ENCODE measurements at regions of chr3 and their contacts with region 1.

Region 1: DNA sequence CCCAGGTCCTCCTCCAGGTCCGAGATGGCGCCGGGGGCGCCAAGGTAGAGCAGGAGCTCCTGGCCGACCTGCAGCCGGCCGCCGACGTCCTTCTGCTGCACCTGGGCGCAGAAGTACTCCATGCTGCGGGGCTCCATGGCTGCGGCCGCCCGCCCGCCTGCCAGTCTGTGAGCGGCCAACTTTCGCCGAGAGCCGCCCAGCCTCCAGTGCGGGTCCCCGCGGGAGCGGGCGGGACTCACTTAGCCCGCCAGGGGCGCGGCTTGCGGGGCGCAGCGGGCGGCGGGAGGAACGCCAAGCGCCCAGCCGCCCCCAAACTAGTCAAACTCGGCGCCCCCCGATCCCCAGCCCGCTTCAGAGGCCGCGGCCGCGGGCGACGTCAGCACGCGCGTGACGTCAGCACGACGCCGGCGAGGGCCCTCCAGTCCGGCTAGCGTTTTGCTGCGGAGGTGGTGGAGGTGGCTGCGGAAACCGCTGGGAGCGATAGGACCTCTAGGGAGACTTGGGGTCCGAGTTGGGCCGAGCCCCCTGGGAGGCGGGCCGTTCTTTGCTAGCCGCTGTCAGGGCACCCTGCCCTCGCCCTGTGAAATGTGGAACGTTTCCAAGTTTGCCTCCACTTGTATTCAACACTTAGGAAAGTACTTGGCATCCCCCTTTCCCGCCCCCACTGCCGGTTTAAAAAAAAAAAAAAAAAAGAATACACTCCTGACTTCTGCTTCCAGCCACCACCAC is at the start of gene CLASP2:
- DNase-seq: peak; percentile 60 to 84
- H3K4me3 ChIP-seq: peak within 1 kb of the TSS; percentile 71
- H3K27ac ChIP-seq: peak within 1 kb of the TSS; percentile 39
- H3K4me1 ChIP-seq: no peaks in the 10 kb centered on the region
- H3K27me3 ChIP-seq: no peaks in the 10 kb centered on the region
- CTCF ChIP-seq: no peak
- total RNA-seq, gene CLASP2: 36.5 and 52.9 TPM in 2 replicates

Region 2: GRCh38 chr3:33131331-33132018 is 586.6 kb before region 1 on chr3:
- CTCF ChIA-PET with region 1: interaction called, 16 read pairs
- POLR2A ChIA-PET with region 1: no interaction called
- intact Hi-C with region 1: loop called (anchors 5 kb)
- DNase-seq: peak; percentile 43 to 48
- H3K4me3 ChIP-seq: no peak overlapping the region
- H3K27ac ChIP-seq: no peak overlapping the region
- H3K4me1 ChIP-seq: no peaks in the 10 kb centered on the region
- H3K27me3 ChIP-seq: no peaks in the 10 kb centered on the region
- CTCF ChIP-seq: peak; percentile 77

Region 3: GRCh38 chr3:33392703-33393125 is 325.3 kb before region 1 on chr3:
- CTCF ChIA-PET with region 1: no interaction called
- POLR2A ChIA-PET with region 1: no interaction called
- intact Hi-C with region 1: loop called (anchors 10 kb)
- DNase-seq: peak; percentile 32 to 72
- H3K4me3 ChIP-seq: no peak overlapping the region
- H3K27ac ChIP-seq: peak overlapping the region; percentile 32; the same call in 1 of the 2 replicates
- H3K4me1 ChIP-seq: peaks cover 15% of the 10 kb centered on the region
- H3K27me3 ChIP-seq: no peaks in the 10 kb centered on the region
- CTCF ChIP-seq: no peak

Region 4: DNA sequence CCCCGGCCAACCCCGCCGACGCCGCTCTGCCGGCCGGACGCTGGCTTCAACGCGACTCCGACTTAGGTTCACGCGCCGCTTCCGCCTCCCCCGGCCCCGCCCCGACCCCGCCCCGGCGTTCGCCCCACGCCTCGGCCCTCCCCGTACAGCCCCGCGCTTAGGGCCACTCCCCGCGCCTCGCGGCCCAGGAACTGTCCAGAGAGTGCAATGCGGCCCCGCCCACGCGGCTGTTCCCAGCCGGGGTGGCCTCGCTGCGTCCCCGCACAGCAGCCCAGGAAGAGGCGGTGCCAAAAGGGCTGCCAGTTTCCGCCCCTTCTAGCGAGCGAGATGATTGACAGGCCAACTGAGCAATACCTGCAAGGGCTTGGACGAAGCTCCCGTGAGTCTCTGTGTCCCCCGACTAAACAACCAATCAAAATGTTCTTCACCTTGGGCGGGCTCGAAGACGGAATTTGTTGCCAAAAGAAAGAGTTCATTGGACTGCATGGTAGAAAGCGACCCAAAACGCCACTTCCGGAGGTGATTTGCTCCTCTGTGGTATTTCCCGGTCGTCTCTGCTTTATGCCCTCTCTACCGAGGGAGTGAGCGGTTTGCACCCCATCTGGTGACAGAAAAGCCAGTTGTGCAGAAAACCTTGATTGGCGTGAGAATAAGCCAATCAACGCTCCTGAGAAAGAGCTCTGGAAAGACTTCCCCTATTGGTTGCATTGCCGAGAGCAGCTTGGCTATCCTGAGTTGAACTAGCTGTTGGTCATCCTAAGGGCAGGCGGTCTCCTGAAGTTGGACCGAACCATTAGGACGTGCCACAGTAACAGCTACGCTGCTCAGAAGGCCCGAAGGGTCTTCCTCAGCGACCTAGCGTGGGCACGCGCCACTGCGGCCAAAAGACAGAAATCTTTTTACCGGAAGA is 277.5 kb before region 1 on chr3 and contains the start of gene UBP1:
- CTCF ChIA-PET with region 1: no interaction called
- POLR2A ChIA-PET with region 1: no interaction called
- intact Hi-C with region 1: loop called (anchors 10 kb)
- DNase-seq: peak; percentile 97 to 99
- H3K4me3 ChIP-seq: peak within 1 kb of the TSS; percentile 78
- H3K27ac ChIP-seq: peak within 1 kb of the TSS; percentile 88
- H3K4me1 ChIP-seq: peaks cover 17% of the 10 kb centered on the region
- H3K27me3 ChIP-seq: no peaks in the 10 kb centered on the region
- CTCF ChIP-seq: no peak
- total RNA-seq, gene UBP1: 47.9 and 50.4 TPM in 2 replicates

Region 5: GRCh38 chr3:33513262-33513863 is 204.7 kb before region 1 on chr3:
- CTCF ChIA-PET with region 1: no interaction called
- POLR2A ChIA-PET with region 1: no interaction called
- intact Hi-C with region 1: no loop called
- DNase-seq: no peak
- H3K4me3 ChIP-seq: no peak overlapping the region
- H3K27ac ChIP-seq: no peak overlapping the region
- H3K4me1 ChIP-seq: no peaks in the 10 kb centered on the region
- H3K27me3 ChIP-seq: no peaks in the 10 kb centered on the region
- CTCF ChIP-seq: no peak

Region 6: GRCh38 chr3:33636125-33636850 is 81.7 kb before region 1 on chr3:
- CTCF ChIA-PET with region 1: interaction called, 3 read pairs
- POLR2A ChIA-PET with region 1: no interaction called
- intact Hi-C with region 1: loop called (anchors 1 kb)
- DNase-seq: peak in 1 of 2 experiments; percentile 2
- H3K4me3 ChIP-seq: no peak overlapping the region
- H3K27ac ChIP-seq: no peak overlapping the region
- H3K4me1 ChIP-seq: no peaks in the 10 kb centered on the region
- H3K27me3 ChIP-seq: no peaks in the 10 kb centered on the region
- CTCF ChIP-seq: peak; percentile 65

Region 7: DNA sequence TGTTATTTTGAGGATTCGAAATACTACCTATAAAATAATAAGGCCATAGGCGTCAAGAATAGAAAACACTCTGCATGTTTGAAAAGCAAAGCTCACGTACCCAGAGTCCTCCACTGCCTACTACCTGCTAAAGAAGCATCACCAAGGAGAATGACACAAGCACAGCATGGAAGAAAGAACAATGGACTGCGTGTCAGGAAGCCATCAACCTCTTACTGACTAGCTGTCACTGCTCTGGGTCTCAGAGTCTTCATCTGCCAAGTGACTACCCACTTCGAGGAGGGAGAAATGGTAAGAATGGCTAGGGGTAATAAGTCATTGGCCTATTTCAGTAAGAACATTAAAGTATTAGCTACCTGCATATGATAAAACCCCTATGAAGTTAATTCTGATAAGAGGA is 49.4 kb before region 1 on chr3:
- CTCF ChIA-PET with region 1: no interaction called
- POLR2A ChIA-PET with region 1: no interaction called
- intact Hi-C with region 1: no loop called
- DNase-seq: no peak
- H3K4me3 ChIP-seq: no peak overlapping the region
- H3K27ac ChIP-seq: no peak overlapping the region
- H3K4me1 ChIP-seq: peaks cover 12% of the 10 kb centered on the region
- H3K27me3 ChIP-seq: no peaks in the 10 kb centered on the region
- CTCF ChIP-seq: no peak

Region 8: DNA sequence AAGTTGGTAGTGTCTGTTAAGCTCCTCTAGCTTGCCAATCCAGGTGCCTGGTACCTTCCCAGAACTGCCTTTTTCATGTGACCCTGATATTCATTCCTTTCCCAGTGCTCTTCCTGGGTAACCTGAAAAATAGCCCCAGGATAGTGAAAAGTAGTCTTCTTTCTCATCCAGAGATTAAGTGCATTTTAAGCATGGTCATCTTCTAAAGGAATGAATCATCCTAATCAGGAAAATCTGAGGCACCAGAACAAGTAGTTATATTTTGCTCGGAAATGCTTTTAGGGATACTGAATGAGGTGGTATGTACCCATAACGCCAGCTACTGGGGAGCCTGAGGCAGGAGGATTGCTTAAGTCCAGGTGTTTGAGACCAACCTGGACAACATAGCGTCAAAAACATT is 57.3 kb after region 1 on chr3:
- CTCF ChIA-PET with region 1: no interaction called
- POLR2A ChIA-PET with region 1: no interaction called
- intact Hi-C with region 1: loop called (anchors 5 kb)
- DNase-seq: no peak
- H3K4me3 ChIP-seq: no peak overlapping the region
- H3K27ac ChIP-seq: no peak overlapping the region
- H3K4me1 ChIP-seq: no peaks in the 10 kb centered on the region
- H3K27me3 ChIP-seq: no peaks in the 10 kb centered on the region
- CTCF ChIP-seq: no peak

Region 9: DNA sequence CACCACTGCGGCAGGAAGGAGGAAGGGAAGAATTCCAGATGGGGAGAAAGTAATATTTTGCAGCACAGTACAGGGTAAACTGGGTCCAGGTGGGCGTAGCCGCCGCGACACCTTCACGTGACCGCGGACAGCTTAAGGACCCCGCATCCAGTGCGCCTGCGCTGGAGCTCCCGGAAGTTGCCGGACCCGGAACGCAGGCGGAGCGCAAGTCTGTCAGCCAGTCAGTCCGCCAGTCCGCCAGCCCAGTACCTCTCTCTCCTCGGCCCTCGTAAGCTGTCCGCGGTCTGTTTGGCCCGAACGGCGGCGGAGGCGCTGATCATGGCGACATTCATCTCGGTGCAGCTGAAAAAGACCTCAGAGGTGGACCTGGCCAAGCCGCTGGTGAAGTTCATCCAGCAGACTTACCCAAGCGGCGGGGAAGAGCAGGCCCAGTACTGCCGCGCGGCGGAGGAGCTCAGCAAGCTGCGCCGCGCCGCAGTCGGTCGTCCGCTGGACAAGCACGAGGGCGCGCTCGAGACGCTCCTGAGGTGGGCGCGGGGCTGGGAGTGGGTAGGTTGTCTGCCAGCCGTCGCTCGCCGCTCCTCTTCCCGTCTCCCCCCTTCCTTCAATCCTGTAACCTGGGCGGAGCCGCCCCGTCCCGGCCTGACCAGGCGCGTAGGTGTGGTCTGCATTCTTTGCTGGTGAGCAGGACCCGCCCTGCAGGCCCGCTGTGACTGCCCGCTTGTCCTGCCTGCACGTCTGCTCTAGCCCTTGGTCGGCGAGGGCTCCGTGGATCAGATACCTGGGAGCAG is 80.6 kb after region 1 on chr3 and contains the start of gene PDCD6IP:
- CTCF ChIA-PET with region 1: no interaction called
- POLR2A ChIA-PET with region 1: no interaction called
- intact Hi-C with region 1: loop called (anchors 5 kb)
- DNase-seq: peak; percentile 80 to 93
- H3K4me3 ChIP-seq: peak within 1 kb of the TSS; percentile 93
- H3K27ac ChIP-seq: peak within 1 kb of the TSS; percentile 92
- H3K4me1 ChIP-seq: peaks cover 9% of the 10 kb centered on the region
- H3K27me3 ChIP-seq: no peaks in the 10 kb centered on the region
- CTCF ChIP-seq: no peak
- total RNA-seq, gene PDCD6IP: 203 and 209 TPM in 2 replicates